Activated naive CD4-positive, alpha-beta T cell treated with anti-CD3 and anti-CD28 coated beads for 36 hours (primary cell): ENCODE measurements at regions of chr18 and their contacts with region 1.

Region 1: GRCh38 chr18:49412679-49413078 is 47.8 kb downstream of the DYM start:
- DNase-seq: no peak
- H3K4me3 Mint-ChIP-seq: no peak overlapping the region
- H3K27ac Mint-ChIP-seq: peak overlapping the region; percentile 79
- H3K4me1 Mint-ChIP-seq: peaks cover 35% of the 10 kb centered on the region
- H3K27me3 Mint-ChIP-seq: no peaks in the 10 kb centered on the region

Region 2: DNA sequence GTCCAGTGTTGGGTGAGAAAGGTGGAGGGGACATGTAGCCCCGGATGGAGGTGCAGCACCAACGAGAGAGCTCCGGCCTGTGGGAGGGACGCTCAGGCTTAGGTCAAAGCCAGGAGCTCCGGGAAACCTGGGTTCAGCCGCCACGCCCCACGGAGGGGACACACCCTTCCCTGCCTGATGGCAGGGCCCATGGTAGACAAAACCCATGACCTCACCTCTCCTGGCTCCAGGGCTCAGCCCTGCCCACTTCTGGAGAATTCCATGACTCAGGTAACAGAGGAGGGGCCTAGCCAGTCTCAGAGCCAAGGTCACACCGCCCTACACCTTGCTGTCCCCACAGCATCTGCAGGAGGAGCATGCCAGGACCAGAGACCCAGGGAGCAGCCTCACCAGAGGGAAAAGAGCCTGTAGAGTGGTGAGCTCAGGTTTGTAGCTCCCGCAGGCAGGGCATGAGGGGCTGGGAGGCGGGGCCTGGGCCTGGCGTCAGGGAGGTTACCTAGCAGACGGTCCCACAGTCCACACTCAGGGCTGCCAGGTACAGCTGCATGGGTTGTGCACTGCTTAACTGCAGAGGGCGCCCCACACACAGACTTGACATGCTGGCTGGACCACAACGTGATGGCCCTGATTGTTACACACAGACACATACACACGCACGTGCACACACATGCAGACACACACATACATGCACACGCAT is 391.1 kb before region 1 on chr18:
- CTCF ChIA-PET with region 1: no interaction called
- intact Hi-C with region 1: loop called (anchors 1 kb)
- DNase-seq: peak; percentile 78
- H3K4me3 Mint-ChIP-seq: no peak overlapping the region
- H3K27ac Mint-ChIP-seq: no peak overlapping the region
- H3K4me1 Mint-ChIP-seq: no peaks in the 10 kb centered on the region
- H3K27me3 Mint-ChIP-seq: no peaks in the 10 kb centered on the region

Region 3: GRCh38 chr18:49161627-49162026 is 251.1 kb before region 1 on chr18:
- CTCF ChIA-PET with region 1: no interaction called
- intact Hi-C with region 1: loop called (anchors 5 kb)
- DNase-seq: peak; percentile 47
- H3K4me3 Mint-ChIP-seq: no peak overlapping the region
- H3K27ac Mint-ChIP-seq: no peak overlapping the region
- H3K4me1 Mint-ChIP-seq: peaks cover 10% of the 10 kb centered on the region
- H3K27me3 Mint-ChIP-seq: no peaks in the 10 kb centered on the region

Region 4: GRCh38 chr18:49178736-49179135 is 233.9 kb before region 1 on chr18:
- CTCF ChIA-PET with region 1: no interaction called
- intact Hi-C with region 1: loop called (anchors 5 kb)
- DNase-seq: peak; percentile 20
- H3K4me3 Mint-ChIP-seq: no peak overlapping the region
- H3K27ac Mint-ChIP-seq: no peak overlapping the region
- H3K4me1 Mint-ChIP-seq: peaks cover 15% of the 10 kb centered on the region
- H3K27me3 Mint-ChIP-seq: no peaks in the 10 kb centered on the region

Region 5: DNA sequence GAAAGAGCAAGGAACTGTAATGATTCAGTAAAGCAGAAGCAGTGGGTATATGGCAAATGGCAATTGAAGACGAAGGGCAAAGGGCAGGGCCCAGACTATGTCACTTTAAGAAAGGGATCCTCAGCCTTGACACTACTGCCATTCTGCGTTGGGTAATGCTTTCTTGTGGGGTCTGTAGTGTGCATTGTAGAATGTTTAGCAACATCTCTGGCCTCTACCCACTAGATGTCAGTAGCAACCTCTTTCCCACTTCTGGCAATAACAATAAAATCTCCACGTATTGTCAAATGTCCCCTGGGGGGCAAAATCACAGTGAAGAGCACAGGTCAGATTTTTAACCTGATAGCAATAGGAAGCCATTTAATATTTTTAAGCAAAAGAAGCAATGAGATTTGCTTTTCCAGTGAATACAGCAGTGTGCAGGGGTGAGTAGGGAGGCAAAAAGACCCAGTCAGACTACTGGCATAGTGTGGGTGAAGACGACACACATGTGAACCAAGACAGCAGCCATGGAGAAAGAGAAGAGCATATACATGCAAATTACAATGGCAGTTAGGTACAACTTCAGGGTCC is 161.8 kb before region 1 on chr18:
- CTCF ChIA-PET with region 1: interaction called, 3 read pairs
- intact Hi-C with region 1: loop called (anchors 2 kb)
- DNase-seq: no peak
- H3K4me3 Mint-ChIP-seq: no peak overlapping the region
- H3K27ac Mint-ChIP-seq: no peak overlapping the region
- H3K4me1 Mint-ChIP-seq: no peaks in the 10 kb centered on the region
- H3K27me3 Mint-ChIP-seq: no peaks in the 10 kb centered on the region

Region 6: DNA sequence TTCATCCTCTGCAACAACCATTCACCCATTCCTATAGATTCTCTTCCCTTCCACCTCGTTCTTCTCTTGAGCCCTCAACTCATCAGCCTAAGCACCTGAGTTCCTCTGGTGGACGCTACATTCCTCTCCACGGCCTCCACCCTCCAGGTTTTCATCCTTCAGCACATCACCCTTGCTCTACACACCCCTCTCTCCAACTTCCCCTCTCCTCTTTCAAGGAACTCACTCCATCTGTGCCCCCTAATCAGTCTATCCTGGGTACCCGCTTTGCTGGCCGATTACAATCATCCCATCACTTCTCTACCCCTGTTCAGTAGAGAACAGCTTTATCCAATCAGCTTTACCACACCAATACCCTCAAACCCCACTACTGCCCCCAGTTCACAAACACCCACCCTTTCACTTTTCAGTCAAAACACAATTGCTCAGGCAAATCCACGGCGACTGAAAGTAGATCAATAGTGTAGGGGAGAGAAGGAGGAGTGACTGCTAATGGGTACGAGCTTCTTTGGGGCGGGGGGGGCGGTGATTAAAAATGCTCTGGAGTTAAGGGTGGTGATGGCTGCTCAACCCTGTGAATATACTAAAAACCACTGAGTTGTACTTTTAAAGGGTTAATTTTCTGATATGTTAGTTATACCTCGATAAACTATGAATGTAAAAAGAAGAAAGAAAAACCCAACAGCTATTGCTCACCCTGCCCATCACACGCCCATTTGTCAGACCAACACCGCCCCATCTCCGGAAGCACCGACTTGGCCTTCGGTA is 46.9 kb after region 1 on chr18:
- CTCF ChIA-PET with region 1: no interaction called
- intact Hi-C with region 1: loop called (anchors 2 kb)
- DNase-seq: peak; percentile 46
- H3K4me3 Mint-ChIP-seq: peak overlapping the region; percentile 89
- H3K27ac Mint-ChIP-seq: no peak overlapping the region
- H3K4me1 Mint-ChIP-seq: peaks cover 45% of the 10 kb centered on the region
- H3K27me3 Mint-ChIP-seq: no peaks in the 10 kb centered on the region

Region 7: GRCh38 chr18:49486953-49487710 is 74.5 kb after region 1 on chr18 and contains the start of gene C18orf32:
- CTCF ChIA-PET with region 1: no interaction called
- intact Hi-C with region 1: no loop called
- DNase-seq: peak; percentile 94
- H3K4me3 Mint-ChIP-seq: peak within 1 kb of the TSS; percentile 94
- H3K27ac Mint-ChIP-seq: peak within 1 kb of the TSS; percentile 94
- H3K4me1 Mint-ChIP-seq: peaks cover 63% of the 10 kb centered on the region
- H3K27me3 Mint-ChIP-seq: no peaks in the 10 kb centered on the region
- total RNA-seq, gene C18orf32: 24.1 to 26.6 TPM